ENCODE measurements at regions of chr9 and their contacts with region 1.

Region 1: DNA sequence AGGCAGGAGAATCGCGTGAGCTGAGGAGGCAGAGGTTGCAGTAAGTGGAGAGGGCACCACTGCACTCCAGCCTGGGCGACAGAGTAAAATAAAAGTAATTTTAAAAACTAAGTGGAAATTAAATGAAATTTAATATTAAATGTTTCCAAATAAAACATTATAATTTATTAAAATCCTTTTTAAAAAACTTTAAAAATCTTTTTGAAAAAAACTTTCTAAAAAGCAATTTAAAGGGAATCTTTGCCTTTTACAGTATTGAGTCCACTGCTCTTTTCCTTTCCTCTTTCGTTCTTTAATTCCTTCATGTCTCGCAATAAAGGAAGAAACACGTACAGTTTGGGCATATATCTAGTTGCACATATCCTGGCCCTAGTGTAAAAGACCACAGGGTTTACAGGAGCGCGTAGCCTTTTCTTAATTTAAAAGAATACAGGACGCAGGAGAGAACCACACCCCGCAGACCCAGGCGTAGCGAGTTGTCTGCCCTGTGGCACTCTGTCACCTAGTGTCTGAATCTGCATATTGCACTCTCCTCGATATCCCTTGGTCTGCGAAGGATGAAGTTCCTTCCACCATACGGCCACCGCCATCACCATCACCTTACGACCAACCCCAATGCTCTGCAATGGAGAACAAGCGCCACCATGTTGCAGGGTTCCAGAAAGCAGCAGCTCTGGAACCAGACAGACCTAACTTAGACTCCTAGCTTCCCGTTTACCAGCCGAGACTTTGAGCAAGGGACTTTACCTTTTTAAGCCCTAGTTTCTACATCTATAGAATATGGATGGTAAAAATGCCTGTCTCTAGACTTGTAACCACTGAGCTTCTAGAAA is 77.6 kb upstream of the DMRT1 start:
- DNase-seq: peak; percentile 57
- H3K4me3 ChIP-seq: peak overlapping the region; percentile 26
- H3K27ac ChIP-seq: no peak overlapping the region
- H3K4me1 ChIP-seq: peaks cover 17% of the 10 kb centered on the region
- H3K27me3 ChIP-seq: peaks cover 12% of the 10 kb centered on the region
- CTCF ChIP-seq: peak; percentile 98

Region 2: GRCh38 chr9:385818-386398 is 378.0 kb before region 1 on chr9:
- intact Hi-C with region 1: loop called (anchors 5 kb)
- DNase-seq: no peak
- H3K4me3 ChIP-seq: no peak overlapping the region
- H3K27ac ChIP-seq: no peak overlapping the region
- H3K4me1 ChIP-seq: no peaks in the 10 kb centered on the region
- H3K27me3 ChIP-seq: no peaks in the 10 kb centered on the region
- CTCF ChIP-seq: peak; percentile 93

Region 3: GRCh38 chr9:613771-614347 is 150.0 kb before region 1 on chr9:
- intact Hi-C with region 1: loop called (anchors 5 kb)
- DNase-seq: peak; percentile 64
- H3K4me3 ChIP-seq: peak overlapping the region; percentile 32
- H3K27ac ChIP-seq: peak overlapping the region; percentile 67
- H3K4me1 ChIP-seq: peaks cover 98% of the 10 kb centered on the region
- H3K27me3 ChIP-seq: no peaks in the 10 kb centered on the region
- CTCF ChIP-seq: peak; percentile 82

Measured in left ventricle myocardium inferior (tissue), 1 donor.